A673 (cell line): ENCODE measurements at regions of chr3 and their contacts with region 1.

Region 1: DNA sequence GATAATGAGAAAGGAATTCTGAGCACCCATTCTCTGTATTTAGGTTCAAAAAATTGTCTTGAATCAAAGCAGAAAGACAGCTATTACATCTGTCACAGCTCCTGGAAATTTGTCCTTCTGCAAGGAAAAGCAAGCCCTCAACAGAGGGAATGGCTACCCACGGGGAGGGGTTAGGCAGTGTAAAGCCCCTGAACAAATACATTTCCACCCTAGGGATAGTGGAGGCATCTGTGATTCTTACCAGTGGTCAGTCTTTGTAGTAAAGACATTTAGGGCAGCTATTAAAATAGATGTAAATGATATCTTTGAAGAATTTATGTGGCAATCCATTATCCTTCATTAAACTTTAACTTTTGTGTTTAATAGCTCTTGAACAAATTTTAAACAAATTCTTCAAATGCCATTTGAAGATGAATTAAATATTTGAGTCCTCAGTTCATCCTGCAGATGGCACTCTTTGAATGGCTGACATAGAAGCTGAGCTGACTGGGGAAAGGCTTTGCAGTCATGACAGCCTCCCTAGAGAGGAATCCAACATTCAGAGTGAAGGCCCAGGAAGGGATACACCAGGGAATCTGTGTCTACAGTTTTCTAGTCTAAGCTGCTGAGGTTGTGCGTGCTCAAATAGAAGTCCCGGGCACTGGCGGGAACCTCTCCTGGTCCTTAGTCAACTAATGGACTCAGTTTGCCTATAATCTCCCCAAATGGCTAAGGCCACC is 359.7 kb upstream of the ROPN1 start:
- DNase-seq: peak; percentile 79
- H3K4me3 ChIP-seq: no peak overlapping the region
- H3K27ac ChIP-seq: no peak overlapping the region
- H3K4me1 ChIP-seq: no peaks in the 10 kb centered on the region
- H3K27me3 ChIP-seq: no peaks in the 10 kb centered on the region
- CTCF ChIP-seq: peak; percentile 79

Region 2: GRCh38 chr3:123993818-123994217 is 357.8 kb before region 1 on chr3:
- CTCF ChIA-PET with region 1: no interaction called
- POLR2A ChIA-PET with region 1: no interaction called
- intact Hi-C with region 1: no loop called
- DNase-seq: no peak
- H3K4me3 ChIP-seq: no peak overlapping the region
- H3K27ac ChIP-seq: no peak overlapping the region
- H3K4me1 ChIP-seq: no peaks in the 10 kb centered on the region
- H3K27me3 ChIP-seq: peaks cover 33% of the 10 kb centered on the region
- CTCF ChIP-seq: no peak

Region 3: DNA sequence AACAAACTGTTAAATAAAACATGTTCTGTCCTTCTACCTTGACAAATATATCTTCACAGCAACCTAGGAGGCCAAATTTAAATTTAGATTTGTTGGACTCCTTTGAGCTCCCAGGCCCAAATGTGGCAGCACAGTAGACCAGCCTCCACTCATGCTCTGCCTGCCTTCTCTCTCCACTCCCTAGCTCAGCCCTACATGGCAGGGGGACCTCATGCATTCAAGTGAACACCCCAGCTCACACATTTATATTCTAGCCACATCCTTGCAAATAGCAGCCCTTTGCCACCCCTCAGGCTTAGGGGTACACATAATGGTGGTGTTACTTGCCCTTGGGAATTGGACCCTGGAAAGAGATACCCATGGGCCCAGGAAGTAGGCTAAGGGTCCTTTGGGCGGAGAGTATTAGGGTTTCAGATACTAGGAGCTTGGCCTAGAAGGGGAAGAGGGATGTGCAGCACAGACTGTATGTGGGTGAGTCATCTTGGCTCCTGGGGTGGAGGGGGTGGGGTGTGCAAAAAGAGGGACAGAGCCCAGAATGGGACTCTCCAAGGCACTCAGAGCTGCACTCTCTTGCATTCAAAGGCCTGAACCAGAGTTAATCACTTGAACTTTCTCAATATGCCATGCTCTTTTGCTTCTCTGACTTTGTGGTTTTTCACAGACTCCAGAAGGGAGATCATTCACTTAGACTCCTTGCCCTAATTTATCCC is 91.2 kb before region 1 on chr3:
- CTCF ChIA-PET with region 1: no interaction called
- POLR2A ChIA-PET with region 1: no interaction called
- intact Hi-C with region 1: no loop called
- DNase-seq: peak; percentile 48
- H3K4me3 ChIP-seq: no peak overlapping the region
- H3K27ac ChIP-seq: no peak overlapping the region
- H3K4me1 ChIP-seq: no peaks in the 10 kb centered on the region
- H3K27me3 ChIP-seq: no peaks in the 10 kb centered on the region
- CTCF ChIP-seq: no peak

Region 4: DNA sequence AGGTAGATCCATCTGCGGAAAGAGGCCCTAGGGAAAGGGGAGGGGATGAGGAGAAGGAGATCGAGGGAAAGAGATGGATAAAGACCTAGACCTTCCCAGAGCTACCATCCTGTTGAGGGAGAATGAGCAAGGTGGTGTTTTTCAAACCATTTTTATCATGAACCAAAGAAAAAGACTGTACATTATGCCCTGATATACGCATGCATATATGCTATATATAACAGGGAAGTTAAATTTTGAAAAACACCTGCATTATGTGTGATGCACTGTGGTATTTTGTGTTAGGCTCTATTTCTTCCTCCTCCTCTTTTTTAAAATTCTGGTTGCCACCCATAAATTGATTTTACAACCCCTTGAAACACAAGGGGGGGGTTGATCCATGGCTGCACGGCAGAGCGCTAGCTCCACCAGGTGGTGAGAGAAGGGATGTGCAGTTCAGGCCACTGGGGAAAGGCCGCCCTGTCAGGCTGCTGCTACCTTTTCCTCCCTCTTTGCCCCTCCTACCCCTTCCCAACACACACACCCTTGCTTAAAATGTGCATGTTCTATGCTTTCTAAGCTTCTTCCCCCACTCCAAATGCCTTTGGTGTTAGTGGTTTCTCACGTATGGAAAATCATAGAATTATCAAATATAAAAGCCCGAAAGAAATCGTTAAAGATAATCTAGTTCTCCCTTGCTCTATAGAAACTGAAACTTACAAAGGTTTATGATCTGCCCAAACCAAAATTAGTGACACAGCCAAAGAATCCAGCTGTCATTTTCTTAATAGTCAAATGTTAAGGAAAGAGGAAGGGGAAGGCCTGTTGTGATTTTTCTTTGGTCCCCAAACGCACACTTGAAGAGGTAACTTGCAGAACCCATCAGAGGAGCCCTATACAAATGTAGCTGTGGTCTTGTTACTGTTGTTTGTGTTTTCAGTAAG is 116.7 kb after region 1 on chr3:
- CTCF ChIA-PET with region 1: interaction called, 11 read pairs
- POLR2A ChIA-PET with region 1: no interaction called
- intact Hi-C with region 1: loop called (anchors 1 kb)
- DNase-seq: peak; percentile 69
- H3K4me3 ChIP-seq: no peak overlapping the region
- H3K27ac ChIP-seq: no peak overlapping the region
- H3K4me1 ChIP-seq: no peaks in the 10 kb centered on the region
- H3K27me3 ChIP-seq: no peaks in the 10 kb centered on the region
- CTCF ChIP-seq: peak; percentile 99